ENCODE measurements at regions of chr17 and their contacts with region 1.

Region 1: GRCh38 chr17:9021158-9021991 is at the start of gene NTN1:
- DNase-seq: peak; percentile 80
- H3K4me3 ChIP-seq: peak within 1 kb of the TSS; percentile 56 to 83 (median 74)
- H3K27ac ChIP-seq: peak within 1 kb of the TSS; percentile 79 to 92 (median 86)
- H3K4me1 ChIP-seq: peaks cover 0 to 32% (median 26%) of the 10 kb centered on the region in 4 donors
- H3K27me3 ChIP-seq: peaks cover 0 to 12% (median 0%) of the 10 kb centered on the region in 3 donors
- CTCF ChIP-seq: no peak
- EP300 ChIP-seq: peak in 1 of 4 donors; percentile 17
- POLR2A ChIP-seq: no peak
- total RNA-seq, gene NTN1: 10.5 to 20.3 (median 16.3) TPM

Region 2: GRCh38 chr17:9002606-9003354 is 18.6 kb before region 1 on chr17:
- intact Hi-C with region 1: no loop called
- DNase-seq: no peak
- H3K4me3 ChIP-seq: peak overlapping the region; percentile 28 to 70 (median 56)
- H3K27ac ChIP-seq: peak overlapping the region; percentile 51 to 74 (median 58)
- H3K4me1 ChIP-seq: peaks cover 0 to 48% (median 26%) of the 10 kb centered on the region in 4 donors
- H3K27me3 ChIP-seq: peaks cover 0 to 13% (median 8%) of the 10 kb centered on the region in 3 donors
- CTCF ChIP-seq: peak in 2 of 4 experiments; percentile 24 to 48
- EP300 ChIP-seq: no peak
- POLR2A ChIP-seq: no peak

Region 3: DNA sequence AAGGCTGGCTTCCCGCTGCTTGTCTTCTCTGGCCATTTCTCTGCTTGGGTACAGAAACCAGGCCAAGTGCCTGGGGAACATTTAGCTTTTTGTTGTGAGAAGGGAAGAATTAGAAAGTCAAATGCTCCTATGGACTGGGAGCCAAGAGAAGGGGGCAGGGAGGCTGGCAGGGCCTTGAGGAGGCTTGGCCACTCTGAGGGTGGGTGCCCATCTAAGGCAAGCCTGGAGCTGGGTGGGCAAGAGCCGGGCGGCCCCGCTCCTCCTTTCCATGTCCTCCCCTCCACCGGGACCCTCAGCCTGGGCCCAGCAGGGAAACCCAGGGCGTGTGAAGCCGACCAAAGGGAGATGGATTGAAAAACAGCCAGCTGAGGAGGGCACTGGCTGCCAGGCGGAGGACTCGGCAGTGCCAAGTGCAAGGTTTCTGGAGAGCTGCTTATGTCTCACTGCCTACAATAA is 69.3 kb after region 1 on chr17:
- intact Hi-C with region 1: loop called (anchors 5 kb)
- DNase-seq: peak; percentile 70
- H3K4me3 ChIP-seq: peak overlapping the region in 1 of 4 donors; percentile 7
- H3K27ac ChIP-seq: peak overlapping the region; percentile 73 to 76 (median 74)
- H3K4me1 ChIP-seq: peaks cover 0 to 30% (median 5%) of the 10 kb centered on the region in 4 donors
- H3K27me3 ChIP-seq: no peaks in the 10 kb centered on the region
- CTCF ChIP-seq: no peak
- EP300 ChIP-seq: no peak
- POLR2A ChIP-seq: no peak

Region 4: DNA sequence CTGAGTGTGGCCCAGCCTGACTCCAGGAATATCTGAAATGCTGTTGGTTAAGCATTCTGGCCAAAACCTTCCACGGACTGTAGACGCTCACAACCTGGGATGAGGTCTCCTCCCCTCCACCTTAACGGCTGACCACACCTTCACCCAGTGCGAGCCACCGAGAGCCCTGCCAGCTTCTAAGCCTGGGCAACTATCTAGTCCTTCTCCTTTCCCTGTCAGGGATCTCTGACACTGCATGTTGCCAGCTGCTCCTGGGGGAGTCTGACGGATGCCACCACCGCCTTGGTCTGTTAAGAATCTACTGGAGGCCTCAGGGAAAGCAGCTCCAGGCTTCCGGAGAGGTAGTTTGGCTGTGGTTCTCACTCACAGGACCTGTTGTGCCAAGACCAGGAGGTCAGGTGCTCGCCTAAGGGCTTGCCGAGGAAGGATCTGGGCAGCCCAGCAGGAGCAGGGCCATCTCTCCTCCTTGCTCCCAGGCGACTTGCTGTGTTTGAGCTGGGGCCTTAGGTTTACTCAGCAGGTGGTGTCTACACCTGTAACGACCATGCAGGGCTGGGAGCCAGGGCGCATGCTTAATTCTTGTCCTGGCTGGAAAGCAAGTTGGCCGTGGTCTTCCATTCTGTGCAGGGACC is 111.7 kb after region 1 on chr17:
- intact Hi-C with region 1: no loop called
- DNase-seq: no peak
- H3K4me3 ChIP-seq: no peak overlapping the region
- H3K27ac ChIP-seq: no peak overlapping the region
- H3K4me1 ChIP-seq: no peaks in the 10 kb centered on the region
- H3K27me3 ChIP-seq: no peaks in the 10 kb centered on the region
- CTCF ChIP-seq: no peak
- EP300 ChIP-seq: no peak
- POLR2A ChIP-seq: no peak

Measured in sigmoid colon (tissue), 7 donors.